PC-3 (cell line): ENCODE measurements at regions of chr18 and their contacts with region 1.

Region 1: GRCh38 chr18:3217948-3218647 is 1.7 kb downstream of the MYOM1 start:
- DNase-seq: peak; percentile 67
- ATAC-seq: peak; percentile 93
- H3K4me3 ChIP-seq: no peak overlapping the region
- H3K27ac ChIP-seq: no peak overlapping the region
- H3K4me1 ChIP-seq: peaks cover 8% of the 10 kb centered on the region; the same call in 1 of the 2 replicates
- H3K27me3 ChIP-seq: no peaks in the 10 kb centered on the region
- CTCF ChIP-seq: no peak

Region 2: GRCh38 chr18:3177902-3178687 is 40.0 kb before region 1 on chr18:
- CTCF ChIA-PET with region 1: no interaction called
- POLR2A ChIA-PET with region 1: no interaction called
- intact Hi-C with region 1: loop called (anchors 5 kb)
- DNase-seq: no peak
- ATAC-seq: no peak
- H3K4me3 ChIP-seq: no peak overlapping the region
- H3K27ac ChIP-seq: no peak overlapping the region
- H3K4me1 ChIP-seq: peaks cover 18% of the 10 kb centered on the region
- H3K27me3 ChIP-seq: no peaks in the 10 kb centered on the region
- CTCF ChIP-seq: no peak

Region 3: GRCh38 chr18:3230401-3231334 is 12.6 kb after region 1 on chr18:
- CTCF ChIA-PET with region 1: no interaction called
- POLR2A ChIA-PET with region 1: interaction called, 17 read pairs
- intact Hi-C with region 1: no loop called
- DNase-seq: peak; percentile 21
- ATAC-seq: no peak
- H3K4me3 ChIP-seq: no peak overlapping the region
- H3K27ac ChIP-seq: no peak overlapping the region
- H3K4me1 ChIP-seq: 0 out of 2 replicates have a peak, but pooled peaks cover under 1% of the 10 kb centered on the region
- H3K27me3 ChIP-seq: no peaks in the 10 kb centered on the region
- CTCF ChIP-seq: no peak

Region 4: DNA sequence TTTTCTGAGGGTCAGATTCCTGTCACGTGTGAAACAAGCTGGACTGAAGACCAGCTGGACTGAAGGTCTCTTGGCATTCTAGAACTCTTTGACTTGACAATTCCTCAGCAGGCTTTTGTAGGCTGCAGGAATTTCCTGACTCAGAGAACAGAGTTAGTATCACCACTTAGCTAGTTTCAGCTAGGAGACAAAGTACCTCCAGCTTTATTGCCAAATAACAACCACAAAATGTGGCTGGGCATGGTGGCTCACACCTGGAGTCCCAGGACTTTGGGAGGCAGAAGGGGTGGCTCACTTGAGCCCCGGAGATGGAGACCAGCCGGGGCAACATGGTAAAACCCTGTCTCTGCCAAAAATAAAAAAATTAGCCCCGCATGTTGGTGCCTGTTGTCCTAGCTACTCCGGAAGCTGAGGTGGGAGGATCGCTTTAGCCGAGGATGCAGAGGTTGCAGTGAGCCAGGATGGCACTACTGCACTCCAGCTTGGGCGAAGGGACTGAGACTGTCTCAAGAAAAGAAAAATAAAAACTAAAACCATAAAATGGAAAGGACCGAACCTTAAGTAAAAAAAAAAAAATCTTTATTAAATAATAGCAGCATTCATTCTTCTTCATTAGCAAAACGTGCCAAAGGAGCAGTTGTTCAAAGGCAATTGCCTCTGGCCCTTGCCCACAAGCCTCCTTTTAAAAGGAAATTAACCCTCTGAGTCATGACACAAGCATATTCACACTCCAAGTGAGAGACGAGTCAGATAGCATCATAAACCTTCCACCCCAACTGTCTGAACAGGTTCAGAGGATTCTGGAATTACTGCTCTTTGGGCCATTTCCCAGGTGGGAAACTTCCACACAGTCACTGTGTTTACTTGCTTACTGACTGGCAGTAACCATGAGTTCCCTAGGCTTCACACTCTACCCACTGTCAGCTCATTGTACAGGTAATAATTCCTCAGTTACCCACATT is 132.7 kb after region 1 on chr18:
- CTCF ChIA-PET with region 1: no interaction called
- POLR2A ChIA-PET with region 1: no interaction called
- intact Hi-C with region 1: no loop called
- DNase-seq: peak; percentile 76
- ATAC-seq: peak; percentile 94
- H3K4me3 ChIP-seq: no peak overlapping the region
- H3K27ac ChIP-seq: no peak overlapping the region
- H3K4me1 ChIP-seq: peaks cover 10% of the 10 kb centered on the region
- H3K27me3 ChIP-seq: no peaks in the 10 kb centered on the region
- CTCF ChIP-seq: no peak